CD4-positive, alpha-beta T cell (primary cell): ENCODE measurements at regions of chr19 and their contacts with region 1.

Region 1: GRCh38 chr19:32599736-32600157 is 18.8 kb downstream of the PDCD5 start:
- DNase-seq: peak in 11 of 14 experiments; percentile 7 to 82 (median 33)
- ATAC-seq: peak; percentile 75
- H3K4me3 ChIP-seq: no peak overlapping the region
- H3K4me3 Mint-ChIP-seq: no peak overlapping the region
- H3K27ac ChIP-seq: no peak overlapping the region
- H3K27ac Mint-ChIP-seq: no peak overlapping the region
- H3K4me1 ChIP-seq: no peaks in the 10 kb centered on the region
- H3K4me1 Mint-ChIP-seq: peaks cover 6% of the 10 kb centered on the region
- H3K27me3 ChIP-seq: no peaks in the 10 kb centered on the region
- H3K27me3 Mint-ChIP-seq: no peaks in the 10 kb centered on the region
- CTCF ChIP-seq: peak; percentile 85

Region 2: GRCh38 chr19:32421589-32422361 is 178.0 kb before region 1 on chr19:
- CTCF ChIA-PET with region 1: no interaction called
- POLR2A ChIA-PET with region 1: no interaction called
- intact Hi-C with region 1: no loop called
- DNase-seq: peak in 3 of 14 experiments; percentile 11 to 30 (median 18)
- ATAC-seq: no peak
- H3K4me3 ChIP-seq: no peak overlapping the region
- H3K4me3 Mint-ChIP-seq: no peak overlapping the region
- H3K27ac ChIP-seq: peak overlapping the region in 1 of 2 donors; percentile 32
- H3K27ac Mint-ChIP-seq: peak overlapping the region; percentile 71
- H3K4me1 ChIP-seq: peaks cover 5% of the 10 kb centered on the region
- H3K4me1 Mint-ChIP-seq: peaks cover 16% of the 10 kb centered on the region
- H3K27me3 ChIP-seq: no peaks in the 10 kb centered on the region
- H3K27me3 Mint-ChIP-seq: no peaks in the 10 kb centered on the region
- CTCF ChIP-seq: no peak

Region 3: GRCh38 chr19:32809254-32809653 is 209.5 kb after region 1 on chr19:
- CTCF ChIA-PET with region 1: no interaction called
- POLR2A ChIA-PET with region 1: no interaction called
- intact Hi-C with region 1: no loop called
- DNase-seq: peak in 1 of 14 experiments; percentile 22
- ATAC-seq: peak; percentile 21
- H3K4me3 ChIP-seq: no peak overlapping the region
- H3K4me3 Mint-ChIP-seq: peak overlapping the region; percentile 5
- H3K27ac ChIP-seq: no peak overlapping the region
- H3K27ac Mint-ChIP-seq: no peak overlapping the region
- H3K4me1 ChIP-seq: peaks cover 12% of the 10 kb centered on the region
- H3K4me1 Mint-ChIP-seq: peaks cover 25% of the 10 kb centered on the region
- H3K27me3 ChIP-seq: no peaks in the 10 kb centered on the region
- H3K27me3 Mint-ChIP-seq: no peaks in the 10 kb centered on the region
- CTCF ChIP-seq: no peak

Region 4: DNA sequence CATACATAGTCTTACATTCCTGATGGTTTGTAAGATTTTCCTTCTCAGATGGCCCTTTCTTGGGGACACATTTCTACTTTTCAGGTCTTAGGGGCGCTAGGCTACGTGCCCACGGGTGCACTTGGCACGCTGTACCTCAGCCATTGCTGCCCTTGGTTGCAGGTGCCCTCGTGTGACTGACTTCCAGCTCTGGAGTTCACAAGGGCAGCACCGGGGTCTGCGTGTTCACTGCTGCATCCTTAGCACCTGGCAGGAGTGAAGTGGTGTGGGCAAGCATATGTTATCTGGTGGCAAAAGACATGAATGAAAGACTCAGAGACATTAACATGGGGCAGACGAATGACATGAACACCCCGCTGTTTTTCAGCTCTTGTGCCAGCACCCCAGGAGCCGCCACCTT is 518.9 kb after region 1 on chr19:
- CTCF ChIA-PET with region 1: no interaction called
- POLR2A ChIA-PET with region 1: no interaction called
- intact Hi-C with region 1: loop called in 1 of 2 experiments (anchors 5 kb)
- DNase-seq: no peak
- ATAC-seq: no peak
- H3K4me3 ChIP-seq: no peak overlapping the region
- H3K4me3 Mint-ChIP-seq: no peak overlapping the region
- H3K27ac ChIP-seq: no peak overlapping the region
- H3K27ac Mint-ChIP-seq: no peak overlapping the region
- H3K4me1 ChIP-seq: no peaks in the 10 kb centered on the region
- H3K4me1 Mint-ChIP-seq: no peaks in the 10 kb centered on the region
- H3K27me3 ChIP-seq: no peaks in the 10 kb centered on the region
- H3K27me3 Mint-ChIP-seq: no peaks in the 10 kb centered on the region
- CTCF ChIP-seq: no peak